Activated T-helper 1 cell treated with anti-CD3 and anti-CD28 coated beads, Interleukin-12 subunit alpha, Interleukin-12 subunit beta, Interleukin-2, Interleukin-4 antibody, amounts not matched to agents 30 ng/mL and 10 ng/mL and 1 ng/mL, durations not matched to agents 14 hours and 24 hours and 36 hours (primary cell): ENCODE measurements at regions of chr12 and their contacts with region 1.

Region 1: DNA sequence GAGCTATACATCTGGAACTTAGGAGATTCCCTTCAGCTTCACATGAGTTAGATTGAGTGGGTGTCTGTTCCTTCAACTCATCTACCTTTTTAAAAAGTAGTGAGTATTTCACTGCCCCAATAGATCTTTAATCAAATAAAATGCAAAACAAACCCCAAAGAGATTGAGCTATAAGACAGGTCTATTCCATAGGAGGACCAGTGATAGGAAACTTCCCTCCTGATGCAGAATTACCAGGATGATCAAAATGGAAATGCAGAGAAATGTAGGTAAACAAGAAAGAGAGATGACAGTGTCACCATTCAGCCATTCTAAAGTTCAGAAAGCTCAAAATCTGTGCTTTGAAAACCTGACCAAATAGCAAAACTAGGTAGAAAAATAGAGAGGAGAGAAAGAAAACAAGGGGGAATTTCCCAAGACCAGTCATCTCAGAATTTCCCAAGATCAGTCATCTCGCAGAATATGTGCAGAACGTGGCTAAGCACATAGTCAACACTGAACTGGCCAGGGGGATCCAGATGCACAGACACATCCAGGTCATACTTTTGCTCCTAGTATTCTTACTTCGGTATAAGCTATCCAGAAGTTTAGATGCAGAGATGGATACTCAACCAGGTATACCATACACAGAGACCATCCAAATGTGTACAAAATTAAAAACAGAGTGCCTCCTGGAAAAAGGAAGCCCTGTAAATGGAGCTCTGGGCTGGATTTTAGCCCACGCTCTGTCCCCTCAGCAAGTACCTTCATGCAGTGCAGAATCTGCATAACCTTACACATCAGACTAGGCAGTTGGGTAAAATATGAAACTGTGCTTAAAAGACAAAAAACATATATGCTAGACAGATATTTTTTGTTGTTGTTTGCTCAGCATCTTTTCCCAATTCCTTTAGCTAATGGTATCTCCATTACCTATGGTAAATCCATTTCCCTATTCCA is 27.4 kb downstream of the SLC41A2 start:
- DNase-seq: peak; percentile 47
- H3K4me3 Mint-ChIP-seq: peak overlapping the region; percentile 11
- H3K27ac Mint-ChIP-seq: peak overlapping the region; percentile 87
- H3K4me1 Mint-ChIP-seq: peaks cover 38% of the 10 kb centered on the region
- H3K27me3 Mint-ChIP-seq: peaks cover 2% of the 10 kb centered on the region

Region 2: DNA sequence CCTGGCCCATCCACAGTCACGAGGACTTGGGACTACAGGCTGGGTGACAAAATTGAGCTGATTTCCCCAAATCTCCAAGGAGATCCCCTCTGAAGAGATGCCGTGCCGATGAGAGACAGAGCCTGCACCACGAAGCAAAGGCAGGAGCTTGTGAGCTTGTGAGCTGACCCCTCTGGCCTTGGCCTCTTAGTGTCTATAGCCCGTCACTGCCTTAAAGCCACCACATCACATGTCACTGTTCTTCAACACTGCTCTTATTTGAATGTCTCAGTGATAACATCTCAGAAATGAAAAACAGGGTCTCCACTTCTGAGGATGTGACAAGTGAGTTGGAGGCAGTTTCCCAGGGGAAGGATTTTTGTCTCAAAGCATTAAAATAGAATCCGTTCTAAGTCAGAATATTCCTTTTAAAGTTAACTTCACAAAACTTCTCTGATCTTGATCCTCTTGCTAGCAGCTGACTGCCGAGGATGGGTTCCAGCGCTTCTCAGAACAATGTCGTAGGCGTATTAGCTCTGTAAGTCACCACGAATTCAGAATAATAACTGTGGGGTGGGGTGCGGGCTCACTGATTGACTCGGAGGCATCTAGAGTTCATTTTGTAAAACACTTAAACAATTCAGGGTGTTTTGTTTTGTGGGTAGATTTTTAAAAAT is 436.4 kb before region 1 on chr12:
- intact Hi-C with region 1: loop called (anchors 1 kb)
- DNase-seq: no peak
- H3K4me3 Mint-ChIP-seq: peak overlapping the region; percentile 64
- H3K27ac Mint-ChIP-seq: peak overlapping the region; percentile 89
- H3K4me1 Mint-ChIP-seq: peaks cover 92% of the 10 kb centered on the region
- H3K27me3 Mint-ChIP-seq: no peaks in the 10 kb centered on the region

Region 3: DNA sequence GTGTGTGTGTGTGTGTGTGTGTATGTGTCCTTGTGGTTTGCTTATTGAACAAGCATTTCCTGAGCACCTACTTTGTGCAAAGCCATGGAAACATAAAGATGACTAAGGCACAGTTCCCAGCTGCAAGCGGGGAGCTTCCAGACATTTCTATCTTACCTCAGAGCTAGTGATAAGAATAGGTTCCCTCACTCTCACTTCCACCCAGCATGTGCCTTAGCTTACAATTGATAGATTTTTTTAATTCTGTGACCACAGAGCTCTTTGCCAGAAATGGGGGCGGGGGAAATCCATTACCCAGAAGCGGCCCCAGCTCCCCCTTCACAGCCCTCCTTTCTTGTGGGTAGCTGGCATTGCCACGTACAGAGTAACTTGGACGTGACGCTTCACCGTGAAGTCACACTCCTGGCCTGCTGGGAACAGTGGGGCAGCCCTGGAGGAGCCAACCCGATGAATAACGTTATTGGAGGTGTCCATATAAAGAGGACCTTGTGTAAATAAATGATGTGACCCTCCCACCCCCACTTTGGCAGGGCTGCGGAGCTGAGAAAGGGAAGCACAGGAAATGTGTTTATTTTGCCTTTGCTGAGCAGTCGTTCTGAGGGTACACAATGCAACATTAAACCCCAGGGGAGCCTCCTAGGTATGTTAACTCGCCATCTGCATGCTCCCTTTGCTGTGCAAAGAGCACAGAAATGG is 235.1 kb before region 1 on chr12:
- intact Hi-C with region 1: loop called (anchors 2 kb)
- DNase-seq: peak; percentile 70
- H3K4me3 Mint-ChIP-seq: peak overlapping the region; percentile 53
- H3K27ac Mint-ChIP-seq: peak overlapping the region; percentile 94
- H3K4me1 Mint-ChIP-seq: peaks cover 84% of the 10 kb centered on the region
- H3K27me3 Mint-ChIP-seq: no peaks in the 10 kb centered on the region

Region 4: DNA sequence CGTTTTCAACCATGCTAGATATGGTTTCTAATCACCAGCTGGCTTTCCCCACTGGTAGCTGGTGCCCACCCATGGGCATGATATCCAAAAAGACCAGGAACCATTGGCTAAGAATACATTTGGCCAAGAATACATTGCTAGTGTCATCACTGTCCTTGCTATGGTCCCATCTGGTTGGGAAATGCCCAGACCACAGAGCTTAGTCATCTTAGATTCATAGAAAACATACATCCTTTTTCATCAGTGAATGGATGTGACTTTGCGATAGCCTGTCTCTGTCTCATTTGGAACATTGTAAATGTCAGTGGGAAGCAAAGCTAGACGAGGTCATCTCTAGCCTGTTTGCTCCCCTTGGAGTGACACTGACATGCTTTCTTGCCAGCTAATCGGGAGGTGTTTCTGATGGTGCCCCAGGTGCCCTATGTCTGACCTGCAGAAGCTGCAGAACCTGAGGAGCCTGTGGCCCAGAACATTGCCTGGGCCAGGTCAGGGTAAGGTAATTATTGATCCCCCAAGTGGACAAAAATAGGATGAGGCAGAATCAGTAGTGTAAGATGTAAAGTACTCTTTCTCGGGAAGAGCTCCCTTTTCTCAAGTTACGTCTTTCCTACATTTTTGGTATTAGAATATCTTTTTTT is 167.4 kb before region 1 on chr12:
- intact Hi-C with region 1: loop called (anchors 1 kb)
- DNase-seq: no peak
- H3K4me3 Mint-ChIP-seq: peak overlapping the region; percentile 76
- H3K27ac Mint-ChIP-seq: peak overlapping the region; percentile 91
- H3K4me1 Mint-ChIP-seq: peaks cover 70% of the 10 kb centered on the region
- H3K27me3 Mint-ChIP-seq: no peaks in the 10 kb centered on the region

Region 5: GRCh38 chr12:104951759-104952509 is 21.3 kb after region 1 on chr12:
- intact Hi-C with region 1: no loop called
- DNase-seq: no peak
- H3K4me3 Mint-ChIP-seq: no peak overlapping the region
- H3K27ac Mint-ChIP-seq: no peak overlapping the region
- H3K4me1 Mint-ChIP-seq: peaks cover 26% of the 10 kb centered on the region
- H3K27me3 Mint-ChIP-seq: peaks cover 11% of the 10 kb centered on the region

Region 6: DNA sequence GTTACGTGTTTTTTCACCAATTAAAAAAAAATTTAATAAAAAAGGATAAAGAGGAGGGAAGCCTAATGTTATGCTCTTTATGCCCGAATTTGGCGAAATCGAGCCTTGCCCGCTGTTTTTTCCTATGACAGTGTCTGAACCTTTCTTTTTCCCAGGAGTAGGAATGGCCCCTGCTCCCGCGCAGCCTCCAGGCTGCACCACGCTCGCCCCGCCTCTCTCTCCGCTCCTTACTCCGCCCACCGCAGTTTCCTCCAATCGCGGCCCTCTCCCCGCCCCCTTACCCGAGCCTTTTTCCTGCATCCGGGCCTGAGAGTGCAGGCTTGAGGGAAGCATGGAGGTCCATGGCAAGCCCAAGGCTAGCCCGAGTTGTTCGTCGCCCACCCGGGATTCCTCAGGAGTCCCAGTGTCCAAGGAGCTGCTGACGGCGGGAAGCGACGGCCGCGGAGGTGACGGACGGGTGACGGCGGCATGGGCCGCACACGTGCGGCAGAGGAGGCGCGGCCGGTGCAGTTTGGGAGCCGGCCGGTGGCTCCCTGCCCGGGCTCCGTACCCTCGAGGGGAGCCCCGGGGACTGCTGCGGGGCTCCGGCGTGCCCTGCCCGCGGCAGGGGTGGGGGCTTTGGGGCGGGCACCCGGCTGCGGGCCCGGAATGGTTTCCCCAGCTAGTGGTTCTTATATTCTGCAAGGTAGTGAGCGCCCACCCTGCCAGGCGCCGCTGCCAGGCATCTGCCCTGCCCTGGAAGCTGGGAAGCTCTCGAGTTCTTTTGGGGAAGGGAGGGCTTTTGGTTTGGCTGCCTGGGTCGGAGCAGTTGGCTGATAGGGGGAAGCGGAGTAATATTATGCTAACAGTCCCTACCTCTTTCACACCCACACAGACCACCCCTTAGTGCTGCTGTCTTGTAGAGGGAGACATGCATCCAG is 55.6 kb after region 1 on chr12 and contains the start of gene NOPCHAP1:
- intact Hi-C with region 1: loop called (anchors 2 kb)
- DNase-seq: peak; percentile 83
- H3K4me3 Mint-ChIP-seq: peak within 1 kb of the TSS; percentile 89
- H3K27ac Mint-ChIP-seq: peak within 1 kb of the TSS; percentile 57
- H3K4me1 Mint-ChIP-seq: peaks cover 44% of the 10 kb centered on the region
- H3K27me3 Mint-ChIP-seq: peaks cover 3% of the 10 kb centered on the region
- total RNA-seq, gene NOPCHAP1: 28.0 and 40.0 TPM in 2 replicates

Region 7: DNA sequence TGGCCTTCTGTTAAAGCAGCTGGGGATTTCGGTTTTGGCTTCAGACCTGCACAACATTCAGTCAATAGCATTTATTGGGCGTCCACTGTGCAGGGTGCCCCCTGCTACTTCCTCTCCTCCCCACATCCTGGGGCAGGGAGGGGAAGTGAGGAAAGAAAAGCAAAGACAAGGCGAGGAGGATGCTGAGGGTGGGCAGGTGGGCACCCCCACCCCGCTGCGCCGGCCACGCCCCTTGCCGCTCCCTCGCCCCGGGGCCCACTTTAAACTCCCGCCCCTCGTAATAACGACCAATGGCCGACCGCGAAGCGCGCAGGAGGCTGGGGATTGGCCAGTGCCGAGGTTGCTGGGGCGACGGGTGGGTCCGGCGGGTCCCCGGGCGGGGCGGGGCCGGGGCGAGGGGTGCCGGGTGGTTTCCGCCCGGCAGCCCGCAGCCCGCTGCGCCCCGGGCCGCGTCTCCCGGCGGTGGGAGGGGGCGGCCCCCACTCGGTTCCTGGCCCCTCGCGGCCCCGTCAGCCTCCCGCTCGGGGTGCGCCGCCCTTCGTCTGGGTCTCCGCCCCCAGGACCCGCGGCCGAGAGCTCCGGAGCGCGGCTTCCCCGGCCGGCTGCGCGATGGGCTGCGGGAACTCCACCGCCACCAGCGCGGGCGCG is 399.8 kb after region 1 on chr12 and contains the start of gene C12orf75:
- intact Hi-C with region 1: loop called (anchors 2 kb)
- DNase-seq: peak; percentile 93
- H3K4me3 Mint-ChIP-seq: peak within 1 kb of the TSS; percentile 87
- H3K27ac Mint-ChIP-seq: peak within 1 kb of the TSS; percentile 91
- H3K4me1 Mint-ChIP-seq: peaks cover 83% of the 10 kb centered on the region
- H3K27me3 Mint-ChIP-seq: no peaks in the 10 kb centered on the region
- total RNA-seq, gene C12orf75: 87.8 and 93.4 TPM in 2 replicates